Activated CD8-positive, alpha-beta T cell treated with anti-CD3 and anti-CD28 coated beads for 36 hours (primary cell): ENCODE measurements at regions of chr11 and their contacts with region 1.

Region 1: DNA sequence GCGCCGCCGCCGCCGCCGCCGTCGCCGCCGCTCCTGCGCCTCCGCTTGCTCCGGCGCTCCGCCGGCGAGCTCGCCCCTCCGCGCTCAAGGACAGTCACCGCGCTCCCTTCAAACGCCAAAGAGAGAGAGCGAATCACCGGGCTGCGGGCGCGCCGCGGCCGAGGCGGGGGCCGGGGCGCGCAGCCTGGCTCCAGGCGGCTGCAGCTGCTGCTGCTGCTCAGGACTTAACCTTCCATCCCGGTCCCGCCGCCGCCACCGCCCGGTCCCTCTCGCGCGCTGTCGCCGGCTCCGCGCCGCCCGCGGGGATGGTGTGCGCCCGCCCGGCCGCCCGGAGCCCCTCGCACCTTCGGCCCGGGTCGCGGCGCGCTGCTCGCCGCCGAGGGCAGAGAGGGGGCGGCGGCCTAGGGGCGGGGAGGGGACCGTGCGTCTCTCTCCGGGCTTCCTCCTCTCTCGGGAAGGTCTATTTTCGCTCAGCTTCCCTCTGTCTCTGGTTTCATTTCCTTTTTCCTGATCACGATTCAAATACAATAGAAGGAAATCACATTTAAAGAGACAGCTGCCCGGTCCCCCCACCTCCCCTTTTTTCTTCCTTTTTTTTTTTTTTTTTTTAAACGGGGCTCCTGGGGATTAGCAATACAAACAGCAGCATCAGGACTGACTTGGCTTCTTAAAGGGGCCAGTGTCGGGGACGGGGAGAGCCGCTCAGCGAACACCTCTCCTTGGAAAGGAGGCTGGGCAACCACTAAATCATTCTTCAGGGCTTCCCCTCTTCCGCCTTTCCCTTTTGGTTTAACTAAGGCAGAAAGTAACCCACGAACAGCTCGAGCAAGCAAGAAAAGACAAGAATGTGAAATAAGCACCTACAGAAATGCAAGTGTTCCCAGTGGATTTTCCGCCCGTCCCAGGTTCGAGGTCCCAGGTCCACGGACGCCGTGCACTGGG is 22.1 kb downstream of the LMO2 start:
- DNase-seq: peak; percentile 23
- ATAC-seq: peak; percentile 72
- H3K4me3 Mint-ChIP-seq: peak overlapping the region; percentile 71
- H3K27ac Mint-ChIP-seq: no peak overlapping the region
- H3K4me1 Mint-ChIP-seq: peaks cover 13% of the 10 kb centered on the region
- H3K27me3 Mint-ChIP-seq: peaks cover 62% of the 10 kb centered on the region
- CTCF ChIP-seq: no peak

Region 2: DNA sequence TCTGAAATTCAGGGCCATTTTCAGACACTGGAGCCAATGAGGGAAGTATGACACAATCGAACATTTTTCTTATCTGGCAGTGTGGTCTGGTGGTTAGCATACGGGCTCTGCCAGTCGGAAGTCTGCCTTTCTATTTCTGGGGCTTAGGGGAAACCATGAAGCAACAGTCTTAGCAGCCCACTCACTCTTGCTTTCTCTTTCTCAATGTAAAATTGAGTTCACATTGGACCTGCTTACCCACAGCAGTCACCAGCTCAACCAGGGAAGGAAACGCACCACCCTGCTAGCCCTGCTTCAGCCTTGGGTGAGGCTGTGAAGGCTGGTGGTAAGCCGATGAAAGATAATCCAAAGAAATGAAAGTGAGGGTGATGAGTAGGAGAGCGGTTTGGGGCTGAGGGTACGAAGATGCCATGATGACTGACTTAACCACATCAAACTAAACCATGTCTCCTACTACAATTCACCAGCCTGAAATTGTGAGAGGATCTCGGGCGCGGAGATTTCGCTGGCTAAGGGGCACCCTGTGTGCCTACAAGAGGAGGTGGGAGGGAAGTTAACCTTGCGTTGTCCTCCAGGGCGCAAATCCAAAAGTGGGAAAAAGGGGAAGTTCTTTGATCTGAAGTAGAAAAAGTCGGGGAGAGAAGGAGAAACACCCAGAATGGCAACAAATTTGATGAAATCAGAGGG is 24.1 kb after region 1 on chr11:
- CTCF ChIA-PET with region 1: interaction called, 4 read pairs
- POLR2A ChIA-PET with region 1: interaction called, 3 read pairs
- intact Hi-C with region 1: loop called (anchors 2 kb)
- DNase-seq: peak; percentile 91
- ATAC-seq: peak; percentile 89
- H3K4me3 Mint-ChIP-seq: peak overlapping the region; percentile 42
- H3K27ac Mint-ChIP-seq: peak overlapping the region; percentile 78
- H3K4me1 Mint-ChIP-seq: peaks cover 47% of the 10 kb centered on the region
- H3K27me3 Mint-ChIP-seq: peaks cover 55% of the 10 kb centered on the region
- CTCF ChIP-seq: no peak